Gastrocnemius medialis (tissue), 4 donors: ENCODE measurements at regions of chr3 and their contacts with region 1.

Region 1: GRCh38 chr3:17023006-17023664 is 138.4 kb downstream of the PLCL2 start:
- DNase-seq: no peak
- ATAC-seq: no peak
- H3K4me3 ChIP-seq: no peak overlapping the region
- H3K27ac ChIP-seq: peak overlapping the region in 1 of 4 donors; percentile 48
- H3K4me1 ChIP-seq: peaks cover 37% of the 10 kb centered on the region in 2 donors
- H3K27me3 ChIP-seq: no peaks in the 10 kb centered on the region
- CTCF ChIP-seq: no peak
- POLR2A ChIP-seq: no peak

Region 2: GRCh38 chr3:16884084-16884747 is 138.9 kb before region 1 on chr3:
- in situ Hi-C with region 1: no loop called
- intact Hi-C with region 1: loop called (anchors 2 kb)
- DNase-seq: peak; percentile 66 to 78
- ATAC-seq: peak; percentile 47 to 63
- H3K4me3 ChIP-seq: peak overlapping the region; percentile 87 to 93 (median 90)
- H3K27ac ChIP-seq: peak overlapping the region; percentile 93 to 98 (median 96)
- H3K4me1 ChIP-seq: peaks cover 55 to 59% of the 10 kb centered on the region in 2 donors
- H3K27me3 ChIP-seq: no peaks in the 10 kb centered on the region
- CTCF ChIP-seq: peak; percentile 64 to 82 (median 76)
- POLR2A ChIP-seq: peak in 1 of 2 donors; percentile 36

Region 3: GRCh38 chr3:16912400-16913263 is 110.5 kb before region 1 on chr3:
- in situ Hi-C with region 1: no loop called
- intact Hi-C with region 1: loop called (anchors 5 kb)
- DNase-seq: no peak
- ATAC-seq: peak; percentile 78 to 85
- H3K4me3 ChIP-seq: no peak overlapping the region
- H3K27ac ChIP-seq: peak overlapping the region; percentile 44 to 86 (median 59)
- H3K4me1 ChIP-seq: peaks cover 82 to 85% of the 10 kb centered on the region in 2 donors
- H3K27me3 ChIP-seq: no peaks in the 10 kb centered on the region
- CTCF ChIP-seq: no peak
- POLR2A ChIP-seq: no peak